OCI-LY7 (cell line): ENCODE measurements at regions of chr19 and their contacts with region 1.

Region 1: GRCh38 chr19:19261350-19262189 is 11.5 kb downstream of the TM6SF2 start:
- DNase-seq: no peak
- H3K4me3 ChIP-seq: no peak overlapping the region
- H3K27ac ChIP-seq: no peak overlapping the region
- H3K4me1 ChIP-seq: no peaks in the 10 kb centered on the region
- CTCF ChIP-seq: no peak

Region 2: DNA sequence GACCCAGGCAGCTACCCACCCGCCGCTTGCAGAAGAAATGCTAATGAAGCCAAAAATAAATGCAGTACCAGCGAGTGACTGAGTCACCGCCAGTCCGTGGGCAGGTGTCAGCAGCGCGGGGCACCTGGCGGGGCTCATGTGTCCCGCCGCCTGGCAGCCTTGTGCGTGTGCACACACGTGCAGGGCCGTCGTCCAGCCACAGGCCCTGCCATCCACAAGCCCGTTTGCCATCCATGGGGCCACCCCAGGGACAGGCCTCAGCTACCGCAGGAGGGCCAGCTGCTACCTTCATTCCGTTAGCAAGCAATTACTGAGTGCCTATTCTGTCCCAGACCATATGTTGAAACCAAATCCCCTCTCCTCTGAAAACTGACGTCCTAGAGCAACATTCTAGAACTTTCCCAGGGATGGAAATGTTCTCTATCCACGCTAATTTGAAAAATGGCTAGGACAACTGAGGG is 29.3 kb before region 1 on chr19:
- CTCF ChIA-PET with region 1: interaction called, 13 read pairs
- POLR2A ChIA-PET with region 1: no interaction called
- intact Hi-C with region 1: no loop called
- DNase-seq: no peak
- H3K4me3 ChIP-seq: no peak overlapping the region
- H3K27ac ChIP-seq: no peak overlapping the region
- H3K4me1 ChIP-seq: no peaks in the 10 kb centered on the region
- CTCF ChIP-seq: no peak

Region 3: GRCh38 chr19:19354932-19355331 is 93.4 kb after region 1 on chr19:
- CTCF ChIA-PET with region 1: no interaction called
- POLR2A ChIA-PET with region 1: no interaction called
- intact Hi-C with region 1: no loop called
- DNase-seq: no peak
- H3K4me3 ChIP-seq: no peak overlapping the region
- H3K27ac ChIP-seq: no peak overlapping the region
- H3K4me1 ChIP-seq: no peaks in the 10 kb centered on the region
- CTCF ChIP-seq: no peak